ENCODE measurements at regions of chrX and their contacts with region 1.

Region 1: DNA sequence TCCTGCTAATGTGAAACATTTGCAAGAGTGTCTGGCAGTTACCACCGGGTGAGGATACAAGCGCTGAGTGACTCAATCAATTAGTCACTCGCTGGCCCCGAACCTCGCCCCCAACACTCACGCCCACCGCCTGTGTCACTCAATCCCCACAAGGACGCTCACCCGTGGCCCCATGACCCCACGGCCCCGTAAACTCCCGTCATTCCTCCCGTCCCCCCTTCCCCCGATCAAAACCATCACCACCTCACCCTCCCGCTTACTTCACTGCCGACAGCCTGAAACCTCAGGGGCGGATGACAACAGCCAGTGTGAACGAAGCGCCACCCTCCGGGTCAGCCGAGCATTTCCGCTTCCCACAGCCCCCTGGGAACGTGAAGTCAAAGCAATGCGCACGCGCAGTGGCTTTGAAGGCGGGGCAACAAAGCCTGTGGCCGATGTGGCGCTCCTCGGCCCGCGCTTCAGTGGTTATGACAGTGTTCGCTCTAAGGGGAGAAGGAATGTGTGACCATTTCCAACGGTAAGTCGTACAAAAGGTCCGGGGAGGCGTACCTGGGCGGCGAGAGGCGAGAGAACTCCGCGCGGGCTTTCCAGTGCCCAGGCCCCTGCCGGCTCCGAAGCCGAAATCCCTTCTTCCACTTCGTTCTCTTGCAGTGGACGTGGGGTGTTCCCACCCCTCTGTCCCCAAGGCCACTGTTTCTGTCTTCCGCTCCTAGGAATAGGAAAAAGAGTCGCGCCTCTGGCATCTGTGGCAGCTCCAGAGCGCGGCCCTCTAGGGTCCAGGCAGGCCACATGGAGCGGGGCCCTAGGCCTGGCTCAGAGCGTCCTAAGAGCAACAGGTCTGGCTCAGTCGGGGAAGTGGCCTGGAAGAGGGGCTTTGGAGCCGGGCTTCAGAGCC is at the start of gene ZNF674:
- DNase-seq: peak; percentile 84 to 93 (median 90)
- ATAC-seq: peak; percentile 97
- H3K4me3 ChIP-seq: peak within 1 kb of the TSS; percentile 81
- H3K4me3 Mint-ChIP-seq: peak within 1 kb of the TSS; percentile 92 to 100 (median 96)
- H3K27ac ChIP-seq: peak within 1 kb of the TSS; percentile 90
- H3K27ac Mint-ChIP-seq: peak within 1 kb of the TSS; percentile 93 to 100 (median 96)
- H3K4me1 ChIP-seq: peaks cover 6 to 18% of the 10 kb centered on the region in 2 donors
- H3K4me1 Mint-ChIP-seq: peaks cover 0 to 29% (median 25%) of the 10 kb centered on the region in 7 donors
- H3K27me3 ChIP-seq: no peaks in the 10 kb centered on the region
- H3K27me3 Mint-ChIP-seq: no peaks in the 10 kb centered on the region
- total RNA-seq, gene ZNF674: 2.1 to 6.9 (median 5.8) TPM

Region 2: GRCh38 chrX:45801554-45801953 is 743.8 kb before region 1 on chrX:
- CTCF ChIA-PET with region 1: no interaction called
- POLR2A ChIA-PET with region 1: no interaction called
- intact Hi-C with region 1: loop called in 1 of 2 experiments (anchors 10 kb)
- DNase-seq: peak in 5 of 9 donors; percentile 9 to 49 (median 35)
- ATAC-seq: peak; percentile 66
- H3K4me3 ChIP-seq: no peak overlapping the region
- H3K4me3 Mint-ChIP-seq: peak overlapping the region in 6 of 10 donors; percentile 19 to 50 (median 33)
- H3K27ac ChIP-seq: no peak overlapping the region
- H3K27ac Mint-ChIP-seq: peak overlapping the region in 5 of 9 donors; percentile 18 to 56 (median 49)
- H3K4me1 ChIP-seq: peaks cover 11 to 20% of the 10 kb centered on the region in 2 donors
- H3K4me1 Mint-ChIP-seq: peaks cover under 1 to 60% (median 25%) of the 10 kb centered on the region in 7 donors
- H3K27me3 ChIP-seq: no peaks in the 10 kb centered on the region
- H3K27me3 Mint-ChIP-seq: no peaks in the 10 kb centered on the region

Region 3: GRCh38 chrX:46408553-46409407 is 136.6 kb before region 1 on chrX:
- CTCF ChIA-PET with region 1: no interaction called
- POLR2A ChIA-PET with region 1: no interaction called
- intact Hi-C with region 1: loop called in 1 of 2 experiments (anchors 1 kb)
- DNase-seq: peak; percentile 12 to 61 (median 38)
- ATAC-seq: peak; percentile 54
- H3K4me3 ChIP-seq: no peak overlapping the region
- H3K4me3 Mint-ChIP-seq: no peak overlapping the region
- H3K27ac ChIP-seq: no peak overlapping the region
- H3K27ac Mint-ChIP-seq: peak overlapping the region in 1 of 9 donors; percentile 59
- H3K4me1 ChIP-seq: no peaks in the 10 kb centered on the region
- H3K4me1 Mint-ChIP-seq: peaks cover 0 to 2% (median 0%) of the 10 kb centered on the region in 7 donors
- H3K27me3 ChIP-seq: no peaks in the 10 kb centered on the region
- H3K27me3 Mint-ChIP-seq: peaks cover 0 to 5% (median 0%) of the 10 kb centered on the region in 5 donors

Region 4: GRCh38 chrX:46485897-46486296 is 59.5 kb before region 1 on chrX:
- CTCF ChIA-PET with region 1: no interaction called
- POLR2A ChIA-PET with region 1: no interaction called
- intact Hi-C with region 1: no loop called
- DNase-seq: peak in 4 of 9 donors; percentile 2 to 19 (median 14)
- ATAC-seq: no peak
- H3K4me3 ChIP-seq: no peak overlapping the region
- H3K4me3 Mint-ChIP-seq: peak overlapping the region in 2 of 10 donors; percentile 25 to 39
- H3K27ac ChIP-seq: no peak overlapping the region
- H3K27ac Mint-ChIP-seq: peak overlapping the region in 3 of 9 donors; percentile 11 to 63 (median 14)
- H3K4me1 ChIP-seq: peaks cover 0 to 8% of the 10 kb centered on the region in 2 donors
- H3K4me1 Mint-ChIP-seq: peaks cover 0 to 23% (median 8%) of the 10 kb centered on the region in 7 donors
- H3K27me3 ChIP-seq: no peaks in the 10 kb centered on the region
- H3K27me3 Mint-ChIP-seq: no peaks in the 10 kb centered on the region

Region 5: DNA sequence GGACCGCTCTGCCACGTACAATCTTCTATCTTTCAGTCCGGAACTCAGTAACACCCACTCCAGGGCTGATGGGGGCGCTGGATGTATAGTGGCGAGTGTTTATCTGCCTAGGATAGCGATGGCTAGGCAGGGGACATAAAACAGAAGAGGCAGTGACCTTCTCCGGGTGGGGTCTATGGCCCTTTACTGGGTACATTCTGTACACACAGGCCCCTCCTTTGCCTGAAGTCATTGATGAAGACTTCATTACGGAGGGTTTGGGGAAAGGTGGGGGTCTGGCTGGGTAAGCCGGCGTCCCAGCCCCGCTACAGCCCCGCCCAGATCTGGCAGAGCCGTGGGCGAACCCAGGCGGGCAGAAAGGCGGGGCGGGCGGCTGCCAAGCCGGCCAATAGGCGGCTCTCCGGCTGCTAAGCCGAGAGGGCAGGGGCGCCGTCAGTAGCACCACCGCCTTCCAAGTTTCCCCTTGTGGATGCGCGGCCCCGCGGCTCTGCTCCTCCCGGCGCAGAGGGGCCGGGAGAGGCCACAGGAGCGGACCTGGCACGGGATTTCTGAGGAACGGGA is 28.1 kb after region 1 on chrX and contains the start of gene CHST7:
- CTCF ChIA-PET with region 1: no interaction called
- POLR2A ChIA-PET with region 1: no interaction called
- intact Hi-C with region 1: loop called (anchors 1 kb)
- DNase-seq: peak in 8 of 9 donors; percentile 15 to 60 (median 25)
- ATAC-seq: peak; percentile 69
- H3K4me3 ChIP-seq: peak within 1 kb of the TSS; percentile 61
- H3K4me3 Mint-ChIP-seq: peak within 1 kb of the TSS; percentile 51 to 84 (median 74)
- H3K27ac ChIP-seq: peak within 1 kb of the TSS; percentile 57
- H3K27ac Mint-ChIP-seq: peak within 1 kb of the TSS in 7 of 9 donors; percentile 17 to 81 (median 72)
- H3K4me1 ChIP-seq: peaks cover 3 to 17% of the 10 kb centered on the region in 2 donors
- H3K4me1 Mint-ChIP-seq: peaks cover 16 to 41% (median 35%) of the 10 kb centered on the region in 7 donors
- H3K27me3 ChIP-seq: no peaks in the 10 kb centered on the region
- H3K27me3 Mint-ChIP-seq: no peaks in the 10 kb centered on the region
- total RNA-seq, gene CHST7: 2.1 to 7.2 (median 2.3) TPM

Region 6: GRCh38 chrX:46686003-46686645 is 140.8 kb after region 1 on chrX:
- CTCF ChIA-PET with region 1: no interaction called
- POLR2A ChIA-PET with region 1: no interaction called
- intact Hi-C with region 1: loop called in 1 of 2 experiments (anchors 5 kb)
- DNase-seq: peak in 6 of 9 donors; percentile 5 to 42 (median 28)
- ATAC-seq: peak; percentile 54
- H3K4me3 ChIP-seq: no peak overlapping the region
- H3K4me3 Mint-ChIP-seq: no peak overlapping the region
- H3K27ac ChIP-seq: no peak overlapping the region
- H3K27ac Mint-ChIP-seq: no peak overlapping the region
- H3K4me1 ChIP-seq: no peaks in the 10 kb centered on the region
- H3K4me1 Mint-ChIP-seq: peaks cover 0 to 15% (median 0%) of the 10 kb centered on the region in 7 donors
- H3K27me3 ChIP-seq: no peaks in the 10 kb centered on the region
- H3K27me3 Mint-ChIP-seq: no peaks in the 10 kb centered on the region

Region 7: GRCh38 chrX:46727441-46727840 is 182.1 kb after region 1 on chrX:
- CTCF ChIA-PET with region 1: no interaction called
- POLR2A ChIA-PET with region 1: no interaction called
- intact Hi-C with region 1: no loop called
- DNase-seq: no peak
- ATAC-seq: no peak
- H3K4me3 ChIP-seq: no peak overlapping the region
- H3K4me3 Mint-ChIP-seq: no peak overlapping the region
- H3K27ac ChIP-seq: no peak overlapping the region
- H3K27ac Mint-ChIP-seq: no peak overlapping the region
- H3K4me1 ChIP-seq: no peaks in the 10 kb centered on the region
- H3K4me1 Mint-ChIP-seq: no peaks in the 10 kb centered on the region
- H3K27me3 ChIP-seq: no peaks in the 10 kb centered on the region
- H3K27me3 Mint-ChIP-seq: no peaks in the 10 kb centered on the region

Region 8: DNA sequence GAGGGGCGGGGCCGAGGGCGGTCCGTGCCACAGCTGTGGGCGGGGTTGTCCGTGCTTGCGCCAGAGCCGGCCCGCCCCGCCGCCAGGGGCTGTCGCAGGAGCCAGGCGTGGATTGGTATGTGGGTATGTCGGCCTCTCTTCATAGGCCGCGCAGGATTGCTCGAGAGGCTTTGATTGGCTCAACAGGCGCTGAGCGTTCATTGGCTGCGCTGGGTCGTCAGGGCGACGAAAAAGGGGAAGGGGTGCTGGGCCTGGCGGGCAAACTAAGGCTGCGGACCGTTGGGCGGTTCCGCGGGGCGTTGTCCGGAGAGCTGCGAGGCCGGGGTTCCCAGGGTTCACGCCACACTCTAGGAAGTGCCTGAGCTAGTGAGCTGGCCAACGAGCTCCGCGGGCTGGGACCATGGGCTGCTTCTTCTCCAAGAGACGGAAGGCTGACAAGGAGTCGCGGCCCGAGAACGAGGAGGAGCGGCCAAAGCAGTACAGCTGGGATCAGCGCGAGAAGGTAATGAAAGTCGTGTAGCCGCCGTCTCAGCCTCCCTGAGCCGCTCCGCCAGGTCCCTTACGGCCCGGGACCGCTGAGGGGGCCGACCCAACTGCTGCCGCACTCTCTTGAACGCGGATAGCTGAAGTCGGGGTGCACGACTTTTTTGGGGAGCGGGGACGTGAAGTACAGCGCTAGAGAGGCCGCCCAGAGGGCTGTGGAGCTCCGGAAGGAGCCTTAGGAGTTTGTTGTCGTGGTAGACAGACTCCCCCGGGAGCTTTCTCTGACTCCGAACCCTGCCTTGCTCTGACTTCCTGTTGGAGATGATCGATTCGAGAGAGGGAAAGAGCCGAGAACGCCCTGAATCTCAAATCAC is 291.6 kb after region 1 on chrX and contains the start of gene RP2:
- CTCF ChIA-PET with region 1: no interaction called
- POLR2A ChIA-PET with region 1: no interaction called
- intact Hi-C with region 1: loop called in 1 of 2 experiments (anchors 1 kb)
- DNase-seq: peak; percentile 65 to 84 (median 81)
- ATAC-seq: peak; percentile 98
- H3K4me3 ChIP-seq: peak within 1 kb of the TSS; percentile 91
- H3K4me3 Mint-ChIP-seq: peak within 1 kb of the TSS; percentile 93 to 99 (median 97)
- H3K27ac ChIP-seq: peak within 1 kb of the TSS; percentile 83
- H3K27ac Mint-ChIP-seq: peak within 1 kb of the TSS; percentile 80 to 98 (median 93)
- H3K4me1 ChIP-seq: no peaks in the 10 kb centered on the region
- H3K4me1 Mint-ChIP-seq: peaks cover 0 to 29% (median 12%) of the 10 kb centered on the region in 7 donors
- H3K27me3 ChIP-seq: no peaks in the 10 kb centered on the region
- H3K27me3 Mint-ChIP-seq: peaks cover 0 to 3% (median 0%) of the 10 kb centered on the region in 5 donors
- total RNA-seq, gene RP2: 4.9 to 14.5 (median 6.3) TPM